PC-3 (cell line): ENCODE measurements at regions of chr15 and their contacts with region 1.

Region 1: GRCh38 chr15:95259513-95259912 is 1028.2 kb downstream of the MCTP2 start:
- DNase-seq: peak; percentile 82
- ATAC-seq: peak; percentile 77
- H3K4me3 ChIP-seq: no peak overlapping the region
- H3K27ac ChIP-seq: no peak overlapping the region
- H3K4me1 ChIP-seq: peaks cover 5% of the 10 kb centered on the region; the same call in 1 of the 2 replicates
- H3K27me3 ChIP-seq: no peaks in the 10 kb centered on the region
- CTCF ChIP-seq: peak; percentile 81

Region 2: DNA sequence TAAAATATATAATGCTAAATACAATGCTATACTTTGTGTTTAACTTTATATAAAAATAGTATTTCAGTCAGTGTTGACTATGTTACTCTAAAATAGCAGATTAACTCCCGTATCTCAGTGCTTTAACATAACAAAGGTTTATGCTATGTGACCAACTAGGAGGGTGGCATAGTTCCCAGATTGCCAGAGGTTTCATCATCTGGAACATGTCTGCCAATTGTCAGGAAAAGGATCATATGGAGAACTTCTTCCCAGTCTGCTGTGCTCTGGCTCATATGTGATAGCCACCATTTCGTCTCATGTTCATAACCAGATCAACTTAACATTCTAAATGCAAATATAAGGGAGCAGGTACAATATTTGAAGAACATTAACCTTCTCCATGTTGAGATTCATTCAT is 308.0 kb before region 1 on chr15:
- CTCF ChIA-PET with region 1: no interaction called
- POLR2A ChIA-PET with region 1: no interaction called
- intact Hi-C with region 1: no loop called
- DNase-seq: no peak
- ATAC-seq: no peak
- H3K4me3 ChIP-seq: no peak overlapping the region
- H3K27ac ChIP-seq: no peak overlapping the region
- H3K4me1 ChIP-seq: no peaks in the 10 kb centered on the region
- H3K27me3 ChIP-seq: peaks cover 3% of the 10 kb centered on the region; the same call in 1 of the 2 replicates
- CTCF ChIP-seq: no peak

Region 3: DNA sequence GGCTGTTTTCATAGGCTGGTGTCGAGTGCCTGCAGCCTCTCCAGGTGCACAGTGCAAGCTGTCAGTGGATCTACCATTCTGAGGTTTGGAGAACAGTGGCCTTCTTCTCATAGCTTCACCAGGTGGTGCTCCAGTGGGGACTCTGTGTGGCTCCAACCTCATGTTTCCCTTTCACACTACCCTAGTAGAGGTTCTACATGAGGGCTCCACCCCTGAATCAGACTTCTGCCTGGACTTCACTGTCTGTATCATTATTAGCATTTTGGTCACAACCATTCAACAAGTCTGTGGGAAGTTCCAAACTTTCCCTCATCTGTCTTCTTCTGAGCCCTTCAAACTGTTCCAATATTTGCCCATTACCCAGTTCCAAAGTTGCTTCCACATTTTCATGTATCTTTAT is 24.5 kb before region 1 on chr15:
- CTCF ChIA-PET with region 1: no interaction called
- POLR2A ChIA-PET with region 1: no interaction called
- intact Hi-C with region 1: no loop called
- DNase-seq: no peak
- ATAC-seq: no peak
- H3K4me3 ChIP-seq: no peak overlapping the region
- H3K27ac ChIP-seq: no peak overlapping the region
- H3K4me1 ChIP-seq: no peaks in the 10 kb centered on the region
- H3K27me3 ChIP-seq: peaks cover 1% of the 10 kb centered on the region; the same call in 1 of the 2 replicates
- CTCF ChIP-seq: no peak

Region 4: DNA sequence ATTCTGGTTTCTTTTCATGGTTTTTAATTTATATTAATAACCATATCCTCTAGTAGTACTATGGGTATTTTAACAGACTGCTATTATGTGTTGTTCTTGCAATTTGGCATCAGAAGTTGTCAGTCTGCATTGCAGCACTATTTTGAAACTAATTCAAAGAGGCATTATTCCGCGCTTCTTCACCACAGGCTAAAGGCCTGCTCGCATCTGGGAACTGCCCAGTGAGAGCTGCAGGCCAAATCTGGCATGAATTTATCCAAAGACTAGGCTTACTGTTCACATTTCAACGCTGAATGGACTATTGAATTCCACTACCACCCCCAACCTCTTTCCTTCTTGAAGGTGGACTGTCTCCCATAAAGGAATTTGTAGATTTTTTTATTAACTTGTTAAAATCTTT is 760.6 kb after region 1 on chr15:
- CTCF ChIA-PET with region 1: no interaction called
- POLR2A ChIA-PET with region 1: no interaction called
- intact Hi-C with region 1: loop called (anchors 10 kb)
- DNase-seq: no peak
- ATAC-seq: no peak
- H3K4me3 ChIP-seq: no peak overlapping the region
- H3K27ac ChIP-seq: no peak overlapping the region
- H3K4me1 ChIP-seq: no peaks in the 10 kb centered on the region
- H3K27me3 ChIP-seq: no peaks in the 10 kb centered on the region
- CTCF ChIP-seq: no peak

Region 5: GRCh38 chr15:97234851-97235610 is 1975.5 kb after region 1 on chr15:
- CTCF ChIA-PET with region 1: no interaction called
- POLR2A ChIA-PET with region 1: no interaction called
- intact Hi-C with region 1: loop called (anchors 5 kb)
- DNase-seq: peak; percentile 70
- ATAC-seq: peak; percentile 63
- H3K4me3 ChIP-seq: peak overlapping the region; percentile 11; the same call in 1 of the 2 replicates
- H3K27ac ChIP-seq: no peak overlapping the region
- H3K4me1 ChIP-seq: no peaks in the 10 kb centered on the region
- H3K27me3 ChIP-seq: peaks cover 55% of the 10 kb centered on the region
- CTCF ChIP-seq: peak; percentile 92